Activated CD4-positive, alpha-beta T cell treated with anti-CD3 and anti-CD28 coated beads, Interleukin-2, amount 10 ng/mL, durations not matched to agents 7 days and 5 days (primary cell): ENCODE measurements at regions of chr20 and their contacts with region 1.

Region 1: GRCh38 chr20:4102381-4102780 is 87.0 kb upstream of the RNF24 start:
- DNase-seq: no peak
- H3K4me3 Mint-ChIP-seq: no peak overlapping the region
- H3K27ac Mint-ChIP-seq: no peak overlapping the region
- H3K4me1 Mint-ChIP-seq: no peaks in the 10 kb centered on the region
- H3K27me3 Mint-ChIP-seq: peaks cover 10% of the 10 kb centered on the region

Region 2: GRCh38 chr20:4064144-4064909 is 38.1 kb before region 1 on chr20:
- CTCF ChIA-PET with region 1: no interaction called
- POLR2A ChIA-PET with region 1: no interaction called
- DNase-seq: no peak
- H3K4me3 Mint-ChIP-seq: no peak overlapping the region
- H3K27ac Mint-ChIP-seq: no peak overlapping the region
- H3K4me1 Mint-ChIP-seq: peaks cover 56% of the 10 kb centered on the region
- H3K27me3 Mint-ChIP-seq: no peaks in the 10 kb centered on the region

Region 3: GRCh38 chr20:4084096-4084495 is 18.3 kb before region 1 on chr20:
- CTCF ChIA-PET with region 1: interaction called, 10 read pairs
- POLR2A ChIA-PET with region 1: no interaction called
- DNase-seq: no peak
- H3K4me3 Mint-ChIP-seq: no peak overlapping the region
- H3K27ac Mint-ChIP-seq: peak overlapping the region; percentile 61
- H3K4me1 Mint-ChIP-seq: peaks cover 46% of the 10 kb centered on the region
- H3K27me3 Mint-ChIP-seq: no peaks in the 10 kb centered on the region

Region 4: DNA sequence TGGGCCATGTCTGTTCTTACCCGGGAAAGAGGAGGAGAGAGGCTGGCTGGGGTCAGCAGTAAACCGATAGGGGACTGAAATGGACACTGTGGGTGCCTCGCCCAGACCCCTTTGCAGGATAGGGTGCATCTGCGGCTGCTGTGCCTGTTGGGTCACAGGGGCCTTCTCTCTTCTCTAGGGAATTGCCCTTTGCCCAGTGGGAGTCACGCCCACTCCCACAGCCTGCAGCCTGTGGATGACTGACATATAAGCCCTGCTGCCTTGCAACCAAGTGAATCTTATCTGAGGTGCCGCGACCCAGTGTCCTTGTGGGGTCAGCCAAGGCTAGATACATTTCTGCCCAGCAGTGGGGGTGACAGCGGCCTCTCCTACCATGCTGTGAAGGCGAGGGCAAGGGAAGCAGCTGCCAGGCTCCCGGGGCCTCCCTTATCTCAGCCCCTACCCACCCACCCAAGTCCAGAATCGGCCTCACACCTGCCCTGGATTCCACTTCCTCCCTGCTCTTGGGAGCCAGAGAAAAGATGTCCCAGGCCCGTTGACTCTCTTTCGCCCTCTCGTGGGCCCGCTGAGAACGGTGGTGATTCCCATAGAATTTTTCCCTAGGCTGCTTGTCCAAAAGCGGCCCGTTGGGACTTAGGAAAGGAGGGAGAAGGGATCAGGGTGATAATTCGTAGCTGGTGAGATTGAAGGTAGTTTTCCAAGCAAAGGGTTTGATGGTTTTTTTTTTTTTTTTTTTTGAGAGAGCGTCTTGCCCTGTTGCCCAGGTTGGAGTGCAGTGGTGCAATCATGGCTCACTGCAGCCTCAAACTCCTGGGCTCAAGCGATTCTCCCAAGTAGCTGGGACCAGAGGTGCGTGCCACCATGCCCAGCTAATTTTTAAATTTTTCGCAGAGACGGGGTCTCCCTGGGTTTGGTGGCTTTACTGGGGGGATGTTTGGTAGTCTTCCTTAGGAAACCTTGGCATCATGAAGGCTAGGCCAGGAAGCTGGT is 10.6 kb before region 1 on chr20:
- CTCF ChIA-PET with region 1: interaction called, 11 read pairs
- POLR2A ChIA-PET with region 1: no interaction called
- DNase-seq: peak; percentile 49
- H3K4me3 Mint-ChIP-seq: no peak overlapping the region
- H3K27ac Mint-ChIP-seq: no peak overlapping the region
- H3K4me1 Mint-ChIP-seq: peaks cover 8% of the 10 kb centered on the region
- H3K27me3 Mint-ChIP-seq: peaks cover 19% of the 10 kb centered on the region

Region 5: GRCh38 chr20:4117158-4117740 is 14.9 kb after region 1 on chr20:
- CTCF ChIA-PET with region 1: no interaction called
- POLR2A ChIA-PET with region 1: no interaction called
- DNase-seq: no peak
- H3K4me3 Mint-ChIP-seq: no peak overlapping the region
- H3K27ac Mint-ChIP-seq: no peak overlapping the region
- H3K4me1 Mint-ChIP-seq: peaks cover 19% of the 10 kb centered on the region
- H3K27me3 Mint-ChIP-seq: peaks cover 14% of the 10 kb centered on the region